ENCODE measurements at regions of chr10 and their contacts with region 1.

Region 1: GRCh38 chr10:97572214-97572989 is at the start of gene ANKRD2:
- DNase-seq: peak; percentile 86 to 93 (median 91)
- H3K4me3 ChIP-seq: no peak within 1 kb of the TSS
- H3K27ac ChIP-seq: no peak within 1 kb of the TSS
- H3K4me1 ChIP-seq: peaks cover 6 to 27% of the 10 kb centered on the region in 2 donors
- H3K27me3 ChIP-seq: no peaks in the 10 kb centered on the region
- CTCF ChIP-seq: peak; percentile 81 to 93 (median 91)
- POLR2A ChIP-seq: no peak
- total RNA-seq, gene ANKRD2: 0.67 to 2.9 (median 2.3) TPM in 7 of 9 donors, not detected in the others

Region 2: DNA sequence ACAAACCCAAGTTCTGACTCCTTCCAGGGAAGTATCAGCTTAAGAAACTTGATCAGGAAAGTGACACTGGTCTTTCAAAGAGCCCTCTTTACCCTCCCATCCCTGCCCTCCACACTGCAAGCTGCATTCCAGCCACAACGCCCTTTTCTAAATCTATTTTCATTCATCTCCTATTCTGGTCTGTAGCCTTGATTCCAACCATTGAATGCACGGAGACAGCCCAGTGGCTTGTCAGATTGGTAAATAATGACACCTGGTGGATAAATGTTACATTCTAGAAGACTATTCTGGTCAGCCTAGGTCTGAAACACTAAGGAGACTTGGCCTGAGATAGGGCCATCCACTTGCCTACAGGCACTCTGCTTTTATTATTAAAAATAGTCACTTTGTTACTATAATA is 40.0 kb after region 1 on chr10:
- intact Hi-C with region 1: loop called (anchors 5 kb)
- DNase-seq: peak in 5 of 7 donors; percentile 33 to 69 (median 37)
- H3K4me3 ChIP-seq: no peak overlapping the region
- H3K27ac ChIP-seq: no peak overlapping the region
- H3K4me1 ChIP-seq: no peaks in the 10 kb centered on the region
- H3K27me3 ChIP-seq: no peaks in the 10 kb centered on the region
- CTCF ChIP-seq: peak; percentile 18 to 67 (median 48)
- POLR2A ChIP-seq: no peak

Region 3: DNA sequence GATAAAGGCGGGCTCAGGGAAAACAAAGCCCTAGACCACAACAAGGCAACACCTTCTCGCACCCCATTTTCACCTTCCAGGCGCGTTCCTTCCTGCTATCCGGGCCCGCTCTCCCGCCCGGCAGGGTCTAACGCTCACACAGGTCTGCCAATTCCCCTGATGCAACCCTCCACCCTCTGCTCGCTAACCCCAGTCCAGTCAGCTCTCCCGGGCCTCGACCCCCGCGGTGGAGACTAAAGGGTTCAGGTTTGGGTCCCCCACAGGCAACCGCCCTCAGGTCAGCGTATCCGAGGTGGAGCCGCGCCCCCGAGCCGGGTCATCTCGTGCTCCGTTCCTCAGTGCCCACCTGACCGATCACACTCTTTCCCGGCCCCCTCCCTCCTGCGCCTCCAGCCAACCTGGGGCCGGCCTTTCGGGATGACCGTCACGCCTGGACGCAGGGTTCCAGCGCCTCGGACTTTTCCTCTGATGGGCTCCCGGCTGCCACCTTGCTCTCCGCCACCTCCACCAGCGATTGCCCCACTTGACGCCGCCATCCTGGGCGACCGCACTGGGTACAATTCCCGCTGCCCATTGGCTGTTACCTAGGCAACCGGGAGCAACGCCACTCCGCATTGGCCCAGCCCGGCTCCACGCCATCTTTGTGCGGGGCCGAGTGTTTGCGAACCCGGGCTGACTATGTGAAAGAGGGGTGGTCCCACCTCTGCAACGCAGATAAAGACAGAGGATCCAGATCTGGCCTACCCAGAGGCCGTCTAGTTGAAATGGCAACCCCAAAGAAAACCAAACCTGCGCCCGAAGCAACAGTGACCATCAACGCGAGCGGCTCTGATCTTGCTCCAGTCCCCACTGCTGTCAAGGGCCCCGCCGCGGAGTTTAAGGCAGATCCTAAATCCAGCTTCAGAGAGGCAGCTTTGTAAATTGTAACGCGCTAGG is 60.8 kb after region 1 on chr10 and contains the start of gene MORN4:
- intact Hi-C with region 1: no loop called
- DNase-seq: peak; percentile 94 to 97 (median 96)
- H3K4me3 ChIP-seq: peak within 1 kb of the TSS; percentile 44 to 95 (median 72)
- H3K27ac ChIP-seq: peak within 1 kb of the TSS in 2 of 5 donors; percentile 59 to 74
- H3K4me1 ChIP-seq: peaks cover 6% of the 10 kb centered on the region in 2 donors
- H3K27me3 ChIP-seq: no peaks in the 10 kb centered on the region
- CTCF ChIP-seq: no peak
- POLR2A ChIP-seq: peak in 1 of 2 donors; percentile 33
- total RNA-seq, gene MORN4: 1.6 to 12.2 (median 7.9) TPM

Region 4: DNA sequence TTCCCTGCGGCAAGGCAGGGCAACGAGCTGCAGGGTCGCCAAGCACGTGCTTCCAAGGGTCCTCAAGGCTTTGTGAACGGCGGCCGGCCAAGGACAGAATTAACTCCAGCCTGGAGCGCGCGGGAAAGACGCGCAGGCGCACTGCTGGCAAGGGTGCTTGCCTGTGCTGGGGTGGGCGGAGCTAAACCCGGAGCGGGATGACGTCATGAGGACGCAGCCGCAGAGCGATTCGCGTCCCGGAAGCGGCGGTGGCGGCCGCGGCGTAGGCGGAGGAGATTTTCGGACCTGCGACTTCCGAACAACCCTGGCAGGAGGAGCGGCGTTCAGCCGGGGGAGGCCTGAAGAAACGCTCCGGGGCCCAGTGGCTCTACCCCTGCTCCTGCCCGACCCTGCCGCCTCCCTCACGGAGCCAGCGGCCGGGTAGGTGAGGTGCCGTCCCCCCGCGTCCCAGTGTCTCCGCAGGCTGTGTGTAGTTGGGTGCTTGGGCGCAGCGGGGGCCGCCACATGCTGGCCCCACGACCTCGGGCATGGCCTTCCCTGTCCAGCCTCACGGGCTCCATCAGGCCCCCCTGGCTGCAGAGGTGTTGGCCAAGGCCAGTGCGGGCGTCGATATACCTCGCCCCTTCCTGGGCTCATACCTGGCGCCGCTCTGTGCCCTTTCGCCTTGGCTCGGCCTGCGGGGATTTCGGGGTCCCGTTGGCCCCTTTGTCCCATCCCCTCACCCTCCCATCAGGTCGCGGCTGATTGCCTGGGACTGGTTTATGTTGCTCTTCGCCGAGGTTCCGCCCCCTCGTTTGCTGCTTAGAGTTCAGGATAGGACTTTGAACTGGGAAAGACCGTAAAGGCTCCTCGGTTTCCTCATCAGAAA is 164.7 kb after region 1 on chr10 and contains the start of gene ZFYVE27:
- intact Hi-C with region 1: loop called in 1 of 2 experiments (anchors 10 kb)
- DNase-seq: peak; percentile 96 to 99 (median 97)
- H3K4me3 ChIP-seq: peak within 1 kb of the TSS; percentile 56 to 95 (median 74)
- H3K27ac ChIP-seq: peak within 1 kb of the TSS; percentile 62 to 98 (median 92)
- H3K4me1 ChIP-seq: peaks cover 7 to 18% of the 10 kb centered on the region in 2 donors
- H3K27me3 ChIP-seq: no peaks in the 10 kb centered on the region
- CTCF ChIP-seq: no peak
- POLR2A ChIP-seq: peak; percentile 94 to 96
- total RNA-seq, gene ZFYVE27: 26.7 to 45.3 (median 34.7) TPM